ENCODE measurements at regions of chrX and their contacts with region 1.

Region 1: DNA sequence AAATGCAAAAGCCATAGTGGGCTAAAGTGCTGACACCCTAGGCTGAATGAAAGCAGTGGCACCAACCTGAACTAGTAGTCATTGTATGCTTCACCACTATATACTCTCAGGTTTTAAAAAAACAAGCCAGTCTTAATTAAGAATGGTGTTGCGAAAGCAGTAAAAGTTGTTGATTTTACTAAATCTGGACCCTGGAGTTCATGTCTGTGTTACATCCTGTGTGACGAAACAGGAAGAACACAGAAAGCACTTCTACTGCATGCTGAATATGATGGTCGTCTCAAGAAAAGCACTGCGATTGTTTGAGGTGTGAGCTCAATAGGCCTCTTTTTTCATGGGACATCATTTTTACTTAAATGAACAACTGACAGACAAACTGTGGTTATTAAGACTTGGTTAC is 24.2 kb upstream of the GDPD2 start:
- DNase-seq: peak in 5 of 14 experiments; percentile 17 to 75 (median 61)
- ATAC-seq: peak; percentile 93
- H3K4me3 ChIP-seq: peak overlapping the region; percentile 12
- H3K4me3 Mint-ChIP-seq: peak overlapping the region; percentile 50
- H3K27ac ChIP-seq: peak overlapping the region; percentile 45 to 66
- H3K27ac Mint-ChIP-seq: peak overlapping the region; percentile 93
- H3K4me1 ChIP-seq: peaks cover 5% of the 10 kb centered on the region
- H3K4me1 Mint-ChIP-seq: peaks cover 16% of the 10 kb centered on the region
- H3K27me3 ChIP-seq: no peaks in the 10 kb centered on the region
- H3K27me3 Mint-ChIP-seq: no peaks in the 10 kb centered on the region
- CTCF ChIP-seq: no peak

Region 2: DNA sequence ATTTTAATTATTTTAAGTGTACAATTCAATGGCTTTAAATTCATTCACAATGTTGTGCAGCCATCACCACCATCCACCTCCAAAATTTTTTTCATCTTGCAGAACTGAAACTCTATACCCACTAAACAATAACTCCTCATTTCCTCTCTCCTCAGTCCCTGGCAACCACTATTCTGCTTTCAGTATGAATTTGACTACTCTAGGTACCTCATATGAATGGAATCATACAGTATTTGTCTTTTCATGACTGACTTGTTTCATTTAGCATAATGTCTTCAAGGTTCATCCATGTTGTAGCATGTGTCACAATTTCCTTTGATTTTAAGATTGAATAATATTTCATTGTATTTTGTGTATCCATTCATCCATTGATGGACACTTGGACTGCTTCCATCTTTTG is 62.1 kb before region 1 on chrX:
- CTCF ChIA-PET with region 1: no interaction called
- POLR2A ChIA-PET with region 1: no interaction called
- intact Hi-C with region 1: loop called in 1 of 2 experiments (anchors 10 kb)
- DNase-seq: peak in 1 of 14 experiments; percentile 1
- ATAC-seq: no peak
- H3K4me3 ChIP-seq: no peak overlapping the region
- H3K4me3 Mint-ChIP-seq: no peak overlapping the region
- H3K27ac ChIP-seq: no peak overlapping the region
- H3K27ac Mint-ChIP-seq: no peak overlapping the region
- H3K4me1 ChIP-seq: no peaks in the 10 kb centered on the region
- H3K4me1 Mint-ChIP-seq: no peaks in the 10 kb centered on the region
- H3K27me3 ChIP-seq: no peaks in the 10 kb centered on the region
- H3K27me3 Mint-ChIP-seq: no peaks in the 10 kb centered on the region
- CTCF ChIP-seq: no peak

Region 3: GRCh38 chrX:70485466-70485865 is 86.6 kb after region 1 on chrX:
- CTCF ChIA-PET with region 1: no interaction called
- POLR2A ChIA-PET with region 1: no interaction called
- intact Hi-C with region 1: no loop called
- DNase-seq: no peak
- ATAC-seq: no peak
- H3K4me3 ChIP-seq: no peak overlapping the region
- H3K4me3 Mint-ChIP-seq: no peak overlapping the region
- H3K27ac ChIP-seq: no peak overlapping the region
- H3K27ac Mint-ChIP-seq: no peak overlapping the region
- H3K4me1 ChIP-seq: no peaks in the 10 kb centered on the region
- H3K4me1 Mint-ChIP-seq: no peaks in the 10 kb centered on the region
- H3K27me3 ChIP-seq: no peaks in the 10 kb centered on the region
- H3K27me3 Mint-ChIP-seq: no peaks in the 10 kb centered on the region
- CTCF ChIP-seq: no peak

Region 4: GRCh38 chrX:70635227-70635626 is 236.3 kb after region 1 on chrX:
- CTCF ChIA-PET with region 1: no interaction called
- POLR2A ChIA-PET with region 1: no interaction called
- intact Hi-C with region 1: no loop called
- DNase-seq: no peak
- ATAC-seq: no peak
- H3K4me3 ChIP-seq: no peak overlapping the region
- H3K4me3 Mint-ChIP-seq: no peak overlapping the region
- H3K27ac ChIP-seq: no peak overlapping the region
- H3K27ac Mint-ChIP-seq: no peak overlapping the region
- H3K4me1 ChIP-seq: no peaks in the 10 kb centered on the region
- H3K4me1 Mint-ChIP-seq: no peaks in the 10 kb centered on the region
- H3K27me3 ChIP-seq: no peaks in the 10 kb centered on the region
- H3K27me3 Mint-ChIP-seq: no peaks in the 10 kb centered on the region
- CTCF ChIP-seq: no peak

Measured in CD4-positive, alpha-beta T cell (primary cell).